IMR-90 (cell line): ENCODE measurements at regions of chr1 and their contacts with region 1.

Region 1: DNA sequence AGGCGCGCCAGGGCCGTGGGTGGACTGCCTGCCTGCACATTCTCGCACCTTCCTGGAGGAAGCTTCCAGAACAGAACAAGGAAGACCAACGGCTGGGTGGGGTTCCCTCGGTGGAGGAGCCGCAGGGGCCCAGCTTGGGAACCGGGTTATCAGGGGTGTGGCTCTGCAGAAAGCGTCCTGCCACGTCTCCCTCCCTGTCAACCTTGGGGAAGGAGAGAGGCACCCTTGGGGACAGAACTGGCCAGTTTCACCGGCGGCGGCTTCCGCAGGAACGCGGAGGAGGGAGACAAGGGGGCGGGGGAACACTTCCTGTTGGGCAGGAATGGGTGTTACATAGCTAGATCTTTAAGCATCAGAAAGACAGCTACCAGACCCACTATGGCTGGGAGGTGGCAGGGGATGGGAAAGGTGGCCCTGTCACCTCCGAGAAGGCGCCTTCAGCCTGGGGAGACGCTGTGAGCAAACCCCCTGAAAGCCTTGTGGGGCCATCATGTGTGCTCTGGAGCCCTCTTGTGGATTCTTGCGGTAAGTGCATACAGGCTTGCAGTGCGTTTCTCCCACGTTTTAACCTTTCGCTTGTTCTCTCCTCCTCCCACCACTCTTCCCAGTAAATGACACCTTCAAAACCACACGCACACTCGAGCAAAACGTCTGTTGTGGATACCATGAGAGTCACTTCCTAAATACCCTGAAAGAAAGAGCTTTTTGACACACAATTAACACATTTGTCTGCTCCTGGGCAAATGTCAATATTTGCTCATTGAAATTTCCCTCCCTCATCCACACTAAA is 3.8 kb upstream of the PLEKHA6 start:
- DNase-seq: peak; percentile 71
- ATAC-seq: peak; percentile 75
- H3K4me3 ChIP-seq: peak overlapping the region; percentile 22
- H3K27ac ChIP-seq: peak overlapping the region; percentile 28; the same call in 1 of the 2 replicates
- H3K4me1 ChIP-seq: peaks cover 14% of the 10 kb centered on the region
- H3K27me3 ChIP-seq: peaks cover 4% of the 10 kb centered on the region
- CTCF ChIP-seq: peak; percentile 98
- POLR2A ChIP-seq: peak; percentile 61; the same call in 1 of the 2 replicates
- RAD21 ChIP-seq: peak; percentile 99

Region 2: GRCh38 chr1:204154568-204155255 is 208.8 kb before region 1 on chr1:
- CTCF ChIA-PET with region 1: no interaction called
- POLR2A ChIA-PET with region 1: no interaction called
- dilution Hi-C with region 1: no loop called
- in situ Hi-C with region 1: loop called (anchors 5 kb)
- intact Hi-C with region 1: no loop called
- DNase-seq: no peak
- ATAC-seq: no peak
- H3K4me3 ChIP-seq: no peak overlapping the region
- H3K27ac ChIP-seq: no peak overlapping the region
- H3K4me1 ChIP-seq: peaks cover 7% of the 10 kb centered on the region
- H3K27me3 ChIP-seq: peaks cover 9% of the 10 kb centered on the region; the same call in 1 of the 2 replicates
- CTCF ChIP-seq: no peak
- POLR2A ChIP-seq: no peak
- RAD21 ChIP-seq: no peak

Region 3: GRCh38 chr1:204207136-204207616 is 156.4 kb before region 1 on chr1:
- CTCF ChIA-PET with region 1: interaction called, 11 read pairs
- POLR2A ChIA-PET with region 1: no interaction called
- dilution Hi-C with region 1: no loop called
- in situ Hi-C with region 1: loop called (anchors 5 kb)
- intact Hi-C with region 1: no loop called
- DNase-seq: no peak
- ATAC-seq: peak; percentile 97
- H3K4me3 ChIP-seq: no peak overlapping the region
- H3K27ac ChIP-seq: no peak overlapping the region
- H3K4me1 ChIP-seq: peaks cover 3% of the 10 kb centered on the region; the same call in 1 of the 2 replicates
- H3K27me3 ChIP-seq: no peaks in the 10 kb centered on the region; the same call in 1 of the 2 replicates
- CTCF ChIP-seq: peak; percentile 82
- POLR2A ChIP-seq: no peak
- RAD21 ChIP-seq: peak; percentile 68

Region 4: DNA sequence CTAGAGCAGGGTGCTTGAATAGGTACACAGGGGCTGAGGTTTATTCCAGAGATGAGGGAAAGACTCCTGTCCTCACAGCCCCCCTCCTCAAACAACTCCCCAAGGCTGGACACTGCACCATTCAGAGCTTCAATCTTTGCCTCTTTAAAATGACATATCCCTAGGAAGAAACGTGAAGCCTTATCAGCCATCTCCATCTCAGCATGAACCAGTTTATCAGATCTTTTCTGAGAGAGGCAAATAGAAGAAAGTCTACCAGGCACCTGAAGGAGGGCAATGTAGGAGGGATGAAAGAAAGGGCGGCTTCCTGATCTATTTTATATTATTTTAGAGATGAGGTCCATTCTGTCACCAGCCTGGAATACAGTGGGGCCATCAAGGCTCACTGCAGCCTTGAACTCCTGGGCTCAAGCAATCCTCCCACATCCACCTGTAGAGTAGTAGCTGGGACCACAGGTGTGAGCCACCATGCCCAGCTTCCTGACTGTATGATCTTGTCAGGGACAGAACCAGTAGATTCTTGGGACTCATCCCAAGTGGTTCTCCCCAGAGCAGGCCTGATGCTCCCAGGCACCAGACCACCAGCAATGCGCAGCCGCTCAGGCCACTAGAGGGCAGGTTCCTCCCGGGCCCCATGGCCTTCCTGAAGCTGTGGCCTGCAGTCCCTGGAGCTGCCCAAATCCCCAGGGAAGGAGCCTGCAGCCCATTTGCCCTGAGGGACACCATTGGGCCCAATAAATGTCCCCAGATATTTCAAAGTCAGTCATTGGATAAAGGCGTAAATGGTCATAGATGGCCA is 105.4 kb before region 1 on chr1:
- CTCF ChIA-PET with region 1: interaction called, 23 read pairs
- POLR2A ChIA-PET with region 1: no interaction called
- dilution Hi-C with region 1: no loop called
- in situ Hi-C with region 1: loop called (anchors 5 kb)
- intact Hi-C with region 1: loop called (anchors 1 kb)
- DNase-seq: peak; percentile 63
- ATAC-seq: peak; percentile 62; the same call in 1 of the 2 replicates
- H3K4me3 ChIP-seq: no peak overlapping the region
- H3K27ac ChIP-seq: no peak overlapping the region
- H3K4me1 ChIP-seq: peaks cover 28% of the 10 kb centered on the region
- H3K27me3 ChIP-seq: no peaks in the 10 kb centered on the region
- CTCF ChIP-seq: peak; percentile 79
- POLR2A ChIP-seq: no peak
- RAD21 ChIP-seq: peak; percentile 92

Region 5: DNA sequence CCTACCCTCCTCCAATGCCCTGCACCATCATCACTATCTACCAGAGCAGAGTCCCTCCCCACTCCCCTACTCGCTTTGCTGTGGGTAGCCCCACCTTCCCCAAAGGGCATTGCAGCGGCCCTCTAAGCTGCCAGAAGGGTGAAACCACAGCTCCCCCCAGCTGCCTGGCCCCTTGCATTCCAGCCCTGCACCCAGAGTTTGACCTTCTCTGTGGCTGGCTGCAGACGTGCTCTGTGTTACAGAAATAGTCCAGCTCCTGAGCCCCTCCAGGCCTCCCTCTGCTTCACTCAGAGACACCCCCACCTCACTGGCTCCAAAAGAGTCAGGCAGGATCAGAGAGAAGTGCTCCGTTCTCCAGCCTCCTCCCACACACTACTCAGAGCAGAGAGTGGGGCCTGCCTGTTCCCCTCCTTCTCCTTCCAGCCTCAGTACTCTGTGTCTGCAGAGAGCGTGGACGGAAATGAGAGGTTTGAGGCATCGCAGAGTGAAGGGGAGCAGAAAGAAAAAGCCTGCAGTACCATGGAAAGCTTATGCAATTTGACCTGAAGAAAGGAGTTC is 67.0 kb before region 1 on chr1:
- CTCF ChIA-PET with region 1: interaction called, 4 read pairs
- POLR2A ChIA-PET with region 1: no interaction called
- dilution Hi-C with region 1: no loop called
- in situ Hi-C with region 1: no loop called
- intact Hi-C with region 1: loop called (anchors 10 kb)
- DNase-seq: peak; percentile 92
- ATAC-seq: peak; percentile 87
- H3K4me3 ChIP-seq: no peak overlapping the region
- H3K27ac ChIP-seq: peak overlapping the region; percentile 93
- H3K4me1 ChIP-seq: peaks cover 28% of the 10 kb centered on the region
- H3K27me3 ChIP-seq: no peaks in the 10 kb centered on the region
- CTCF ChIP-seq: no peak
- POLR2A ChIP-seq: no peak
- RAD21 ChIP-seq: no peak